Mammary epithelial cell (primary cell): ENCODE measurements at regions of chr2 and their contacts with region 1.

Region 1: DNA sequence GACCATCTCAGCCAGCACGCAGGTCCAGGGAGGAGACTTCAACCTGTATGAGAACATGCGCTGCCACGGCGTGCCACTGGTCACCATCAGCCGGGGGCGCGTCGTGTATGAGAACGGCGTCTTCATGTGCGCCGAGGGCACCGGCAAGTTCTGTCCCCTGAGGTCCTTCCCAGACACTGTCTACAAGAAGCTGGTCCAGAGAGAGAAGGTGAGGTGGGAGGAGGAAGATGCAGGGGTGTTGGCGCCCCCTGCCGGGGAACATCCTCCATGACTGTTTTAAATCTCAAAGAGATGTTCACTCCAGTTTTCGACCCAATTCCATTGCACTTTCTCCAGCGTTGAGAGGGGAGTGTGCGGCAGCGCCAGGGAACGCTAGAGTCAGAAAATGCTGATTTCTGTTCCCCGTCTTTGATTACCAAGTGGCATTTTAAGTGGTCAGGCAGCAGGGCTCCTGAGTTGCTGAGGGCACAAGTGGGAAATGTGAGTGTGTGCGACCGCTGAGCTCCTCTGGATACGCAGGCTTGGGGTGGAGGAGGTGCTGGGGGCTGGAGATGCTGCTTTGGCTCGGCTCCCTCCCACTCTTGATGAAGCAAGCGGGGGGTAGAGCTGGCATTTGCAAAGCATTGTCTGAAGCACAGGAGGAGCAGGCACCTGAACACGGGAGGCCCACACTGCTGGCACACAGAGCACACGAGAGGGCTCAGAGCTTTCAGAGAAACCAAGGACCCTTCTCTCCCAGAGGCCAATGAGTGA is 27.7 kb upstream of the MAPRE3 start:
- DNase-seq: peak; percentile 34
- H3K4me3 ChIP-seq: no peak overlapping the region
- H3K27ac ChIP-seq: no peak overlapping the region
- H3K4me1 ChIP-seq: peaks cover 9% of the 10 kb centered on the region
- H3K27me3 ChIP-seq: no peaks in the 10 kb centered on the region
- CTCF ChIP-seq: peak; percentile 74 to 85

Region 2: GRCh38 chr2:26605195-26605998 is 337.3 kb before region 1 on chr2:
- CTCF ChIA-PET with region 1: no interaction called
- dilution Hi-C with region 1: no loop called
- in situ Hi-C with region 1: no loop called
- intact Hi-C with region 1: loop called (anchors 5 kb)
- DNase-seq: peak; percentile 35
- H3K4me3 ChIP-seq: no peak overlapping the region
- H3K27ac ChIP-seq: no peak overlapping the region
- H3K4me1 ChIP-seq: peaks cover 6% of the 10 kb centered on the region
- H3K27me3 ChIP-seq: no peaks in the 10 kb centered on the region
- CTCF ChIP-seq: peak; percentile 77 to 90

Region 3: GRCh38 chr2:26840937-26841613 is 101.6 kb before region 1 on chr2:
- CTCF ChIA-PET with region 1: no interaction called
- dilution Hi-C with region 1: no loop called
- in situ Hi-C with region 1: loop called (anchors 5 to 10 kb)
- intact Hi-C with region 1: loop called (anchors 1 kb)
- DNase-seq: peak; percentile 16
- H3K4me3 ChIP-seq: no peak overlapping the region
- H3K27ac ChIP-seq: no peak overlapping the region
- H3K4me1 ChIP-seq: no peaks in the 10 kb centered on the region
- H3K27me3 ChIP-seq: peaks cover 3% of the 10 kb centered on the region
- CTCF ChIP-seq: peak; percentile 27 to 41

Region 4: GRCh38 chr2:26901326-26902183 is 41.2 kb before region 1 on chr2:
- CTCF ChIA-PET with region 1: no interaction called
- dilution Hi-C with region 1: loop called (anchors 5 kb)
- in situ Hi-C with region 1: no loop called
- intact Hi-C with region 1: no loop called
- DNase-seq: no peak
- H3K4me3 ChIP-seq: no peak overlapping the region
- H3K27ac ChIP-seq: no peak overlapping the region
- H3K4me1 ChIP-seq: no peaks in the 10 kb centered on the region
- H3K27me3 ChIP-seq: no peaks in the 10 kb centered on the region
- CTCF ChIP-seq: no peak